ENCODE measurements at regions of chr11 and their contacts with region 1.

Region 1: GRCh38 chr11:86291466-86292262 is 10.4 kb upstream of the HIKESHI start:
- DNase-seq: peak; percentile 33
- H3K4me3 Mint-ChIP-seq: no peak overlapping the region
- H3K27ac Mint-ChIP-seq: peak overlapping the region; percentile 74
- H3K4me1 Mint-ChIP-seq: peaks cover 52% of the 10 kb centered on the region
- H3K27me3 Mint-ChIP-seq: no peaks in the 10 kb centered on the region

Region 2: DNA sequence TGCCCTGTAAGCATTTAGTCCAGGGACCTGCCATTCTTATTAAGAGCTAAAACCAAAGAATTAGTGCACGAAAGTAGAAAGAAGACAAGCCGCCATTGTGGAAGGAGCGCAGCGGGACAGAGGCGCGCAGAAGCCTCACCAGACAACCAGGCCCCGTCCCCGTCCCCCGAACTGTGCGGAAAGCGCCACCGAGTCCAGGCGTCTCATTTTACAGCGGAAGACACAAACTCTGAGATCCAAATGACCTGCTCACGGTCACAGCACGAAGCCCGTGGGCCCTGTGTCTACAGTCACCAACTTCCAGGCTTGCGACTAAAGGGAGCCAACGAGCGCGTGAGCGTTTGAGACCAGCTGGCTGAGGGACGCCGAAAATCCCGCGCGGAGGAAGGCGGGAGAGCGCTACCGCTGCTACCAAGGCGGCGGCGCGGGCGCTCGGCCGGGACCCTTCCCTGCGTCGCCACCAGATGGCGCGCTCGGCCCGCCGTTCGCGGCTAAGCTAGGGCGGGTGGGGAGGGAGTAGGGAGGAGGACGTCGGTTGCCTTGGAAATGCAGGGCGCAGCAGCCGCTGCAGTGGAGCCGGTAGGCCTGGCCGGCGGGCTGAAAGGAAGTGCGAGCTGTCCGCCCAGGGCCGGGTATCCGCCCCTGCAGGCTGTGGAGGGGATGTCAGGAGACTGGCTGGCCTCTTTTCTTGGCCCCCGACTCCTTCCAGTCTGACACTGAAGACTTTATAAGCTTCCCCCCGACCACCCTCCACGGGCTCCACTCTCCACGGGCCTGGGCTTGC is 436.9 kb before region 1 on chr11:
- intact Hi-C with region 1: loop called (anchors 2 kb)
- DNase-seq: peak; percentile 87
- H3K4me3 Mint-ChIP-seq: peak overlapping the region; percentile 84
- H3K27ac Mint-ChIP-seq: peak overlapping the region; percentile 90
- H3K4me1 Mint-ChIP-seq: peaks cover 13% of the 10 kb centered on the region
- H3K27me3 Mint-ChIP-seq: peaks cover 3% of the 10 kb centered on the region

Region 3: DNA sequence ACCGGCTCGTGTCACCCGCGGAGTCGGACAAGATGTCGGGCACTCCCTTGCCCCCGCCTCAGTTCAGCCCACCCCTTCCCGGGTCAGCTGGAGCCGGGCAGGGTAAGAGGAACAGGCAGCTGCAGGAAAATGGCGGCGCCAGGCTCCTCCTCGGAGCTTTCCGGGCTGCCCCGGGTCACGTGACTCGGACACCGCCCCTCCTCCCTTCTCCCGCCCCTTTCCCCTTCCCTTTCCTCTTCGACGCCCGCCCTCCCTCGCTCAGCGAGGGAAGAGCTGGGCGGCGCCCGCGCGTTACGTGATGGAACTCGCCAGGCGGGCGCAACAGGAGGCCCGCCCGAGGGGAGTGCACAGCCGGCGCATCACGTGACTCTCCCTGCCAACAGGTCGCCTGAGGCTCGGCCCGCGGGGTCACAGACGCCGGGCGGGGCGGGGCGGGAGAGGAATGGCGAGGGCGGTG is 222.7 kb before region 1 on chr11 and contains the start of gene PICALM:
- intact Hi-C with region 1: loop called (anchors 1 kb)
- DNase-seq: peak; percentile 97
- H3K4me3 Mint-ChIP-seq: peak within 1 kb of the TSS; percentile 95
- H3K27ac Mint-ChIP-seq: peak within 1 kb of the TSS; percentile 88
- H3K4me1 Mint-ChIP-seq: peaks cover 30% of the 10 kb centered on the region
- H3K27me3 Mint-ChIP-seq: peaks cover 2% of the 10 kb centered on the region
- total RNA-seq, gene PICALM: 193 and 213 TPM in 2 replicates

Region 4: DNA sequence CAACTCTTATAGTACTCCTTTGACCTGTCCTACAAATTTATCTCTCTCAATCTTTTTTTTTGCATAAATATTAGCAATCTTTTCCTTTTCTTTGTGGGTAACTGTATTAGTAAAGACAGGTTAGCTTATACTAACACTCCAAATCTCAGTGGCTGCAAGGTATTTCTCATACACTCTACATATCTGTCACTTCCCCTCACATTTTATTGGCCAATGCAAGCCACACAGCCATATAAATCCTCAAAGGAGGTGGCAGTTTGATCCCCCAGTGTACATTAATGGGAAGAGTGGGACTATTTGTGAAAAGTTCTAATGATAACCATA is 89.7 kb before region 1 on chr11:
- intact Hi-C with region 1: loop called (anchors 1 kb)
- DNase-seq: no peak
- H3K4me3 Mint-ChIP-seq: no peak overlapping the region
- H3K27ac Mint-ChIP-seq: no peak overlapping the region
- H3K4me1 Mint-ChIP-seq: peaks cover 15% of the 10 kb centered on the region
- H3K27me3 Mint-ChIP-seq: no peaks in the 10 kb centered on the region

Region 5: GRCh38 chr11:86244522-86245368 is 46.9 kb before region 1 on chr11 and contains the start of gene EED:
- intact Hi-C with region 1: loop called (anchors 1 kb)
- DNase-seq: peak; percentile 92
- H3K4me3 Mint-ChIP-seq: no peak within 1 kb of the TSS
- H3K27ac Mint-ChIP-seq: no peak within 1 kb of the TSS
- H3K4me1 Mint-ChIP-seq: peaks cover 38% of the 10 kb centered on the region
- H3K27me3 Mint-ChIP-seq: no peaks in the 10 kb centered on the region
- total RNA-seq, gene EED: 174 and 182 TPM in 2 replicates

Region 6: GRCh38 chr11:86802601-86803051 is 511.0 kb after region 1 on chr11:
- intact Hi-C with region 1: loop called (anchors 5 kb)
- DNase-seq: no peak
- H3K4me3 Mint-ChIP-seq: no peak overlapping the region
- H3K27ac Mint-ChIP-seq: no peak overlapping the region
- H3K4me1 Mint-ChIP-seq: peaks cover 59% of the 10 kb centered on the region
- H3K27me3 Mint-ChIP-seq: peaks cover 50% of the 10 kb centered on the region